ENCODE measurements at regions of chr2 and their contacts with region 1.

Region 1: GRCh38 chr2:148524519-148524919 is 120.0 kb upstream of the EPC2 start:
- DNase-seq: peak in 13 of 14 experiments; percentile 30 to 89 (median 59)
- ATAC-seq: peak; percentile 92
- H3K4me3 ChIP-seq: no peak overlapping the region
- H3K4me3 Mint-ChIP-seq: peak overlapping the region; percentile 71
- H3K27ac ChIP-seq: peak overlapping the region; percentile 56 to 64
- H3K27ac Mint-ChIP-seq: peak overlapping the region; percentile 85
- H3K4me1 ChIP-seq: peaks cover 84% of the 10 kb centered on the region
- H3K4me1 Mint-ChIP-seq: peaks cover 90% of the 10 kb centered on the region
- H3K27me3 ChIP-seq: no peaks in the 10 kb centered on the region
- H3K27me3 Mint-ChIP-seq: no peaks in the 10 kb centered on the region
- CTCF ChIP-seq: no peak

Region 2: GRCh38 chr2:148020111-148021058 is 504.1 kb before region 1 on chr2 and contains the start of gene ORC4:
- CTCF ChIA-PET with region 1: no interaction called
- POLR2A ChIA-PET with region 1: interaction called, 21 read pairs
- intact Hi-C with region 1: loop called (anchors 2 to 5 kb)
- DNase-seq: peak; percentile 90 to 100 (median 97)
- ATAC-seq: peak; percentile 89
- H3K4me3 ChIP-seq: peak within 1 kb of the TSS; percentile 90
- H3K4me3 Mint-ChIP-seq: peak within 1 kb of the TSS; percentile 93
- H3K27ac ChIP-seq: peak within 1 kb of the TSS; percentile 86 to 94
- H3K27ac Mint-ChIP-seq: peak within 1 kb of the TSS; percentile 87
- H3K4me1 ChIP-seq: peaks cover 17% of the 10 kb centered on the region
- H3K4me1 Mint-ChIP-seq: peaks cover 82% of the 10 kb centered on the region
- H3K27me3 ChIP-seq: no peaks in the 10 kb centered on the region
- H3K27me3 Mint-ChIP-seq: no peaks in the 10 kb centered on the region
- CTCF ChIP-seq: no peak
- total RNA-seq, gene ORC4: 29.4 to 33.9 TPM

Region 3: DNA sequence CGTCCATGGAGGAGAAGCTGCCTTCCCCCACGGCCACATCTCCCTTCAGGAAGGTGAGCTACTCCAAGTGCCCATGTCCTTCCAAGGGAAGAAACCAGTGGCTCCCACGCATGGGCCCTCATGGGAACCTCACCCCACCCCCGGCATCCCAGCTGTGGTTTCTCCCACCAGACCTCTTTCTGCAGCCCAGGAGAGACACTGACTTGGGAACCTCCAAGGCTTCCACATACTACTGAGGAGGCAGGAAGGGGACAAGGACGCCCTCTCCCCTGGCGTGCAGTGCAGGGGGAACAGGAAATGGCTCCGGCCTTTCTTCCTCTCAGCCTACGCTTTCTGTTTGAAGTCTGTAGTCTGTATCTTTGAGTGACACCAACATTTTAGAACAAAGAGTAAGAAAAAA is 15.5 kb after region 1 on chr2:
- CTCF ChIA-PET with region 1: no interaction called
- POLR2A ChIA-PET with region 1: interaction called, 39 read pairs
- intact Hi-C with region 1: no loop called
- DNase-seq: peak in 5 of 14 experiments; percentile 26 to 56 (median 41)
- ATAC-seq: peak; percentile 78
- H3K4me3 ChIP-seq: no peak overlapping the region
- H3K4me3 Mint-ChIP-seq: peak overlapping the region; percentile 21
- H3K27ac ChIP-seq: no peak overlapping the region
- H3K27ac Mint-ChIP-seq: peak overlapping the region; percentile 31
- H3K4me1 ChIP-seq: peaks cover 40% of the 10 kb centered on the region
- H3K4me1 Mint-ChIP-seq: peaks cover 48% of the 10 kb centered on the region
- H3K27me3 ChIP-seq: no peaks in the 10 kb centered on the region
- H3K27me3 Mint-ChIP-seq: no peaks in the 10 kb centered on the region
- CTCF ChIP-seq: no peak

Region 4: GRCh38 chr2:148546270-148546669 is 21.8 kb after region 1 on chr2:
- CTCF ChIA-PET with region 1: no interaction called
- POLR2A ChIA-PET with region 1: interaction called, 41 read pairs
- intact Hi-C with region 1: no loop called
- DNase-seq: no peak
- ATAC-seq: no peak
- H3K4me3 ChIP-seq: no peak overlapping the region
- H3K4me3 Mint-ChIP-seq: no peak overlapping the region
- H3K27ac ChIP-seq: no peak overlapping the region
- H3K27ac Mint-ChIP-seq: peak overlapping the region; percentile 2
- H3K4me1 ChIP-seq: peaks cover 36% of the 10 kb centered on the region
- H3K4me1 Mint-ChIP-seq: peaks cover 36% of the 10 kb centered on the region
- H3K27me3 ChIP-seq: no peaks in the 10 kb centered on the region
- H3K27me3 Mint-ChIP-seq: no peaks in the 10 kb centered on the region
- CTCF ChIP-seq: no peak

Region 5: GRCh38 chr2:148552675-148553331 is 28.3 kb after region 1 on chr2:
- CTCF ChIA-PET with region 1: interaction called, 3 read pairs
- POLR2A ChIA-PET with region 1: interaction called, 41 read pairs
- intact Hi-C with region 1: loop called in 1 of 2 experiments (anchors 2 kb)
- DNase-seq: peak in 5 of 14 experiments; percentile 18 to 70 (median 67)
- ATAC-seq: peak; percentile 81
- H3K4me3 ChIP-seq: peak overlapping the region; percentile 57
- H3K4me3 Mint-ChIP-seq: no peak overlapping the region
- H3K27ac ChIP-seq: peak overlapping the region; percentile 46 to 65
- H3K27ac Mint-ChIP-seq: no peak overlapping the region
- H3K4me1 ChIP-seq: peaks cover 14% of the 10 kb centered on the region
- H3K4me1 Mint-ChIP-seq: no peaks in the 10 kb centered on the region
- H3K27me3 ChIP-seq: no peaks in the 10 kb centered on the region
- H3K27me3 Mint-ChIP-seq: no peaks in the 10 kb centered on the region
- CTCF ChIP-seq: no peak

Region 6: GRCh38 chr2:148874868-148875341 is 350.4 kb after region 1 on chr2 and contains the start of gene KIF5C:
- CTCF ChIA-PET with region 1: no interaction called
- POLR2A ChIA-PET with region 1: interaction called, 8 read pairs
- intact Hi-C with region 1: loop called (anchors 10 kb)
- DNase-seq: peak; percentile 78 to 95 (median 88)
- ATAC-seq: peak; percentile 90
- H3K4me3 ChIP-seq: peak within 1 kb of the TSS; percentile 70
- H3K4me3 Mint-ChIP-seq: peak within 1 kb of the TSS; percentile 92
- H3K27ac ChIP-seq: no peak within 1 kb of the TSS
- H3K27ac Mint-ChIP-seq: no peak within 1 kb of the TSS
- H3K4me1 ChIP-seq: peaks cover 24% of the 10 kb centered on the region
- H3K4me1 Mint-ChIP-seq: peaks cover 24% of the 10 kb centered on the region
- H3K27me3 ChIP-seq: peaks cover 2 to 13% of the 10 kb centered on the region in 2 experiments
- H3K27me3 Mint-ChIP-seq: peaks cover 52% of the 10 kb centered on the region
- CTCF ChIP-seq: no peak
- total RNA-seq, gene KIF5C: 7.3 to 8.1 TPM